GM10248 (cell line): ENCODE measurements at regions of chr12 and their contacts with region 1.

Region 1: GRCh38 chr12:110826592-110827200 is 20.1 kb upstream of the CCDC63 start:
- DNase-seq: peak; percentile 85
- CTCF ChIP-seq: peak; percentile 61

Region 2: DNA sequence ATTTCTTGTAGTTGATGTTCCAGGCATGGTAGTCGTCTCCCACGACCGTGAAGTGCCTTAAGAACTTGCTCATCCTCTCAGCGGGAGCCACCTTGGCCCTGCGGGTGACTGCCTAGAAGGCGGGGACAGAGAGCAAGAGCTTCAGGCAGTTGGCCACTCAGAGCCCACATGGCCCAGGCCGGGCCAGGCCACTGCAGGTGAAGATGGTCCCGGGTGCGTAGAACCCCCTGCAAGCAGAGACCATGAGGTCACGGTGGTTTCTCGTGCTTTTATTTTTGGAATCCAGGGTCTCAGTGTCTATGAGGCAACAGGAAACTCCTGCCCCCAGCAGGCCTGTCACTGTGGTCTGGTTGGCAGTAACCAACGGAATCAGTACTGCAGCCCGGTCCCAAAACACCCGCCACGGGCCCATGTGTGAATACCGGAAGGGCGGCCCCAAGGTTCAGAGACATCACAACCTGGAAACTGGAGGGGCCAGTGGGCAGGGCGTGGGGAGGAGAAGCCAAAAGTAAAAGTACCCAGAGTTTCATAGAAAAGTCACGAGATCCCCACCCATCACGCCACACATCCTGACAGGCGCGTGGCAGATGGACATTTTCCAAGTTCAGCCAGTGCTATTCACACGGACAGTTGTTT is 165.2 kb before region 1 on chr12:
- CTCF ChIA-PET with region 1: no interaction called
- POLR2A ChIA-PET with region 1: no interaction called
- DNase-seq: peak; percentile 85
- CTCF ChIP-seq: no peak

Region 3: GRCh38 chr12:110704748-110705147 is 121.9 kb before region 1 on chr12:
- CTCF ChIA-PET with region 1: interaction called, 12 read pairs
- POLR2A ChIA-PET with region 1: no interaction called
- DNase-seq: peak; percentile 39
- CTCF ChIP-seq: peak; percentile 20

Region 4: GRCh38 chr12:110776410-110776809 is 50.3 kb before region 1 on chr12:
- CTCF ChIA-PET with region 1: interaction called, 15 read pairs
- POLR2A ChIA-PET with region 1: no interaction called
- DNase-seq: peak; percentile 82
- CTCF ChIP-seq: no peak

Region 5: DNA sequence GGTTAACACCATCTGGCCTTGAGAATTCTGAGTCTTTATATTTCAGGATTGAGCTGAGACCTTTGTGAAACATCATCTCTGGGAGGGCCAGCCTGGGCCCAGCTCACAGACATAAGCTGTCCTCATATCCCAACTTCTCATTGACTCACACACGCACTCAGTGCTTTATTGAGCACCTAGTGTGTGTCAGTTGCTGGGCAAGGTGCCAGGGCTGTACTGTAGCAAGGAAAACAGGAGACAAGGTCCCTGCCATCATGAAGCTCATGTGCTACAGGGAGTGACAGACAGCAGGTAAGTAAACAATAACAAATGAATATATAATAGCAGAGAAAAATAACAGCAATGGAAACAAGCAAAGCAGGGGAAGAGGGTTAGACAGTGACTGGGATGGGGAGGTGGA is 10.4 kb before region 1 on chr12:
- CTCF ChIA-PET with region 1: interaction called, 27 read pairs
- POLR2A ChIA-PET with region 1: no interaction called
- DNase-seq: no peak
- CTCF ChIP-seq: no peak